ENCODE measurements at regions of chr4 and their contacts with region 1.

Region 1: GRCh38 chr4:52812634-52813033 is 49.5 kb upstream of the RASL11B start:
- DNase-seq: no peak
- H3K4me3 ChIP-seq: no peak overlapping the region
- H3K27ac ChIP-seq: no peak overlapping the region
- H3K4me1 ChIP-seq: no peaks in the 10 kb centered on the region
- H3K27me3 ChIP-seq: no peaks in the 10 kb centered on the region
- CTCF ChIP-seq: no peak

Region 2: DNA sequence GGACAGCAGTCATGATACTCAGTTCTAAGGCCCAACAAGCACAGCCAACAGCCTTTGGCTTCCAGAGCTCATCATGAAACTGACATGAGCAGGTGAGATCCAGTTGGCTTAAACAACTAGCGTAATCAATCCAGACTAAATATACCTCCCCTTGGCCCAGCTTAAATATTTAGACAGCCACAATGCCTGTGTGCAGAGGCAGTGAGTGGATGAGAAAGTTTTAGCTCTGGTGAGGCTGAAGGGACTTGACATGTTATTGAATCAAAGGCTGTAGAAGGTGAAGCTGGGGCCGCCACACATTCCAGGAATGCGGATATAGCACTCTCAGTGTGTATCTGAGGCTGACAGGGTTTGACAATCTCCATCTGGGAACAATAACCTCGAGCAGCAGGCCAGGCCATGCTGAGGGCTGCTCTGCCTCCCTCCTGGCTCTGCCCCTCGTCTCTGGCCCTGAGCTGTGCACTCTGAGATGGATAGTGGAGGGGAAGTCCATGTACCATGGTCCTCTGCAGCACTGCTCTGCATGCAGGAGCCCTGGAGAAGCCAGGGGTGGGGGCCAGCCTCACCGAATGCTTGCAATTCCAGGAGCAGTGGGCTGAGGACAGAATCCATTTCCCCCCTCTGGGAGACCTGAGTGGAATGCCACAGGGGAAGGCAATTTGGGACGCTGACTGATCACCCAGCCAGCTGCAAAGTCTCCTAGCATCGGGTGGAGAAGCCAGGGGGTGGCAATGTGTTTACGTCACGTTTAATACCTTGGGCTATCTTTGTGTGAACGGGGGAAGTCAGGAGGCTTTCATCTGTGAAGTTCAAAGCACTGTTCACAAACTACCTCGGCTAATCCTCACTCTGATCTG is 12.2 kb after region 1 on chr4:
- intact Hi-C with region 1: loop called (anchors 2 kb)
- DNase-seq: no peak
- H3K4me3 ChIP-seq: no peak overlapping the region
- H3K27ac ChIP-seq: no peak overlapping the region
- H3K4me1 ChIP-seq: no peaks in the 10 kb centered on the region
- H3K27me3 ChIP-seq: no peaks in the 10 kb centered on the region
- CTCF ChIP-seq: no peak

Measured in tibial artery (tissue), 4 donors.